ENCODE measurements at regions of chr6 and their contacts with region 1.

Region 1: DNA sequence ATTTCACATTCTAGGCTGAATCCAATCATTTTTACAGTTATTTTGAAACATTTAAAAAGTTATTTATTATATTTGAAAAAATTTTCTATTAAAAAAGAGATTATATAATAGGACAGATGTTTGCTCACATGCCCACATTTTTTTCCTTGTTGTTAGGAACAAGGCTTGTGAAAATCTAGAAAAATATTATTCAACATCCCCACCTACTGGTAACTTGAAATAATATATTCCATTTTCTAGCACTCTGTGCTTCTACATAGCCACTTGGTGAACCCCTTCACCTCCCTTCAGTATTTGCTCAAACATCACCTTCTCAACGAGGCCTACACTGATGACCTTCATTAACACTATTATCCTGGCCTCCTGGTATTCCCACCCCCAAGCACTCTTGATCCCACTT is 18.3 kb upstream of the GPRC6A start:
- DNase-seq: no peak

Region 2: GRCh38 chr6:116779573-116780164 is 67.6 kb before region 1 on chr6:
- intact Hi-C with region 1: loop called (anchors 1 kb)
- DNase-seq: no peak